ENCODE measurements at regions of chr6 and their contacts with region 1.

Region 1: DNA sequence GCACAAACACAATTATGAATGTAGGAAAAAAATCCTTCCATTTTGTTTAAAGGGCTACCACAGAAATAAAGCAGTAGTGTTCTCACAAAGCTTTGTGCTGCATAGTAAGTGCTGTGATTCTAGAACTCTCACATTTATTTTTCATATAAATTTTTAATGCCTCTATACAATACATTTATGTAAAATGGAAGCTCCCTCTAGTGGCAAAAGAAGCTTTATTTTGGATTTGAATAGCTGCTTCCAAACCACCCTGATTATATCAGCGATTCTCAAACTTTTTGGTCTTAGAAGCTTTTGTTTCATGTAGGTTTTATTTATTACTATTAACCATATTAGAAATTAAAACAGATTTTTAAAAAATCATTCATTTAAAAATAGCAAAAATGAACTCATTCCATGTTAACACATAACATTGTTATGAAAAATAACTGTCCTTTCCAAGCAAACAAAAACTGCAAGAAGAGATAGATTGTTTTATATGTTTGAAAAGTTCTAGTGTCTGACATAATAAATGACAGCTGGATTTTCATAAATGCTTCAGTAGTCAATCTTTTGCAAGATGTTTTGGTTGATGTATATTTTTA is 38.4 kb downstream of the HS3ST5 start:
- DNase-seq: no peak
- H3K4me3 Mint-ChIP-seq: no peak overlapping the region
- H3K27ac Mint-ChIP-seq: no peak overlapping the region
- H3K4me1 Mint-ChIP-seq: no peaks in the 10 kb centered on the region
- H3K27me3 Mint-ChIP-seq: no peaks in the 10 kb centered on the region

Region 2: DNA sequence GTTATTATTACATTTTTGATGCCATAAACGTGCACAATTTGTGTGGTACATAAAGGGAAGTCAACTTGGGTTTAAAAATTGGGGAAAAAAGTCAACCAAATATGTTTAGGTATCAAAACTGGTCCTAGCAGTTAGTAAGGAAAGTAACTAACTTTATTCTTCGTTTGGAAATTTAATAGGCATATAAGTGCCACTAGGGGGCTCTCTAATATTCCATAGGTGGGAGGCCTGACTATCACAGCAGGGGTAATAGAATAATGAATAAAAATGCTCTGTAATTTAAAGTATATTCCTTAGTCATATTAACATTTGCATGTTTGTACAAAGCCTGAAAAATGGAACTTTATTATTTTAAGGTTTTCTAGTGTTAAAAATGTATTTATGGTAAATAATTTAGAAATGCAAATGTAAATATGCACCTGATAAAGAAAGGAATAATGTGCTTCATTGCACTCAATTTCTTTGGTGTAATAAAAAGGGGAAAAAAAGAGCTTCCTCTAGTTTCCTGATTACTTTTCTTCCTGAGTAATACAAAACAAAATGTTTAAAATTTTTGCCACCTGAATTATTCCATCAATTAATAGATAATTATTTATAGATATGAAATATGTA is 207.7 kb before region 1 on chr6:
- intact Hi-C with region 1: loop called (anchors 1 kb)
- DNase-seq: no peak
- H3K4me3 Mint-ChIP-seq: no peak overlapping the region
- H3K27ac Mint-ChIP-seq: no peak overlapping the region
- H3K4me1 Mint-ChIP-seq: no peaks in the 10 kb centered on the region
- H3K27me3 Mint-ChIP-seq: peaks cover 3% of the 10 kb centered on the region

Measured in activated T-helper 1 cell treated with anti-CD3 and anti-CD28 coated beads, Interleukin-12 subunit alpha, Interleukin-12 subunit beta, Interleukin-2, Interleukin-4 antibody, amounts not matched to agents 30 ng/mL and 10 ng/mL and 1 ng/mL, durations not matched to agents 14 hours and 24 hours and 36 hours (primary cell).